ENCODE measurements at regions of chr1 and their contacts with region 1.

Region 1: DNA sequence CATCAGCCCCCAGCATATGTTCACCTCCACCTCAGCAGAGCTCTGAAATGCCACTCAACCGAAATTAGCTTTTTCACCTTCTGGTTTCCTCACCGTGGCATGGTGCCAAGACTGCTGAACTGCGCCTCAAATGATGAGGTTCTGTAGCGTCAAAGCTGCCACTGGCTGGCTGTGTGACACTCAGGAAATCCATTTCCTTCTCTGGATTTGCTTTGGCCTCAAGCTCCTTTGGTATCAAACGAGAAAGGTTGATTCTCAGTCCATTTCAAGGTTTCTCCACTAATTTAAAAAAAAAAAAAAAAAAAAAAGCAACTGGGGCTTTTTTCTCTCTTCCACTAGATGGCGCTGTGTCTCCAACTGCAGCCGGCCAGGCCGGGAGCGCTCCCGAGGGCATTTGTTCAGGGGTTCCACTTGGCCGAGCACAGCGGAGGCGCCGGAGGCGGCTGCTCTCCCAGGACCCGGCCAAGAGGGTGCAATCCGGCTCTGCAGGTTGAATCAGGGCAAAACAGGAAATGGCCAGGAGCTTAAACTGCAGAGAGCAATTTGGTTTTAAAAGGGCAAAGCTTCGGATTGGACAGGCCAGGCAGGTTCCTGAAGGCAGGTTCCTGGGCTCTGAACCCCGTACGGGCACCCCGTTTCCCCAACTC is 26.5 kb upstream of the PLA2G2C start:
- DNase-seq: peak; percentile 70
- H3K4me3 ChIP-seq: no peak overlapping the region
- H3K27ac ChIP-seq: no peak overlapping the region
- H3K4me1 ChIP-seq: no peaks in the 10 kb centered on the region
- H3K27me3 ChIP-seq: peaks cover 48% of the 10 kb centered on the region
- CTCF ChIP-seq: peak; percentile 93

Region 2: DNA sequence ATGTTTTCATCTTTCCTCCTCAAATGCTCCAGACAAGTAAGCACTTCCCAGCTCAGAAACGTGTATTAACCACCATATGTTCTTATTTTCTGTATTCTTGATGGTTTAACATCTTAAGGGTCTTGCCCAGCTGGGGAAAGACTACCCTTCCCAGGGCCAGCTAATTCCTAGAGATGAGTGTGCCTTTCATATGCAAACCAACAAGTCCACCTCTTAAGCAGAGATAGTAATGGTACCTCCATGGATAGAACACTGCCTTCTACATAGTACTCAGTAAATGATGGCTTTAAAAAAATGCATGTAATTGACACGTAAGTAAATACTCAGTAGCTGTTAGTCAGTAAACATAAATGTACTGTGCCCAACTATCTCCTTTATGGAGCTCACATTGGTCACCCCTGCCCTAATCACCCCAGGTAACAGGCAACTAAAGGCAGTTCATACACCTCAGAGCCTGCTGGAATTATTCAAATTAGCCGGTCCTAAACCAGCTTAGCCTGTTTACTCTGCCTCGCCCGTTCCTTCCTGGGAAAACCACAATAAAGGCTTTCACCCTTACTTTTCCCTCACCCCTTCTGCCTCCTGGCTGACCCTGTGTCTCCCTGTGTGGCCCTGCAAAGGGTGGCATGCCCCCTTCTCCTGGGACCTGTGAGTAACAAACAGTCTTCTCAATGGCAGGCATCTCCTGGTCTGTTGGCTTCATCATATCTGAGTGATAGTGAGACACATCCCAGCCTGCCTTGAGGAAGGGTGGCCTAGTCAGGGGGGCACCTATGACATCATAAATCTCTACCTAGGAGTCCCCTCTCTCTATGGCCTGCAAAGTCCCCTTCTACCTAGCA is 1772.2 kb before region 1 on chr1:
- CTCF ChIA-PET with region 1: interaction called, 11 read pairs
- POLR2A ChIA-PET with region 1: no interaction called
- intact Hi-C with region 1: no loop called
- DNase-seq: no peak
- H3K4me3 ChIP-seq: no peak overlapping the region
- H3K27ac ChIP-seq: no peak overlapping the region
- H3K4me1 ChIP-seq: no peaks in the 10 kb centered on the region
- H3K27me3 ChIP-seq: no peaks in the 10 kb centered on the region
- CTCF ChIP-seq: no peak

Region 3: DNA sequence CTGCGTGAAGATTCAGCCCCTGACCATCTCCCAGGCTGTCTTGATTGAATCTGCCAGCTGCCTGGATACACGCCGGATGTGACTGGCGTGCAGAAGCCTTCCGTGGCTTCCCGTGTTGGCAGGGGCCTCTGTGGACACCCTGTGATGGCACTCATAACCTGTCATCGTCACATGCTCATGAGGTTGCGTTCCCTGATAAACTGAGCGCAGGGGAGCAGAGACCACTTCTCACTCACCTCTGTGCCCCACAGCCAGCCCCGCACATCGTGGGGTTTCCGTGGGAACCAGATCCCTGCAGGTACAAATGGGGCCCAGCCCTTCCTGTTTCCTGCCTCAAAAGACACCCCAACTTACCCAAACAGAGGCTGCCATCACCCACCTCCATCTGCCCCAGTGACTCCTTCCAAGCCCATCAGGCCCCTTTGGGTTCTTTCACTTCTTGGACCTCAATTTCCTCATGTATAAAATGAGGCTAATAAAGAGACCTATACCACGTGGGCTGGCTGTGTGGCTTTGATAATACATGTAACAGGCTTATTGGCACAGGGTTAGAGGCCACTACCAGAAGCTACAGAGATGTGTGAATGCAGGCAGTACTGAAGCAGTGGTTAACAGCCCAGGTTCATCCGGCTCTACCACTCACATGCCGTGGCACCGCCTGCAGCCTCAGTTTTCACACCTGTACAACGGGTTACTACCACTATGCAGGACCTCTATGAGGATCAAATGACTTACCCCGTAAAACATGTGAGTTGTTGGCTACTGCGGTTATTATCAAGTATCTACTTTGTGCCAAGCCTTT is 524.6 kb before region 1 on chr1:
- CTCF ChIA-PET with region 1: interaction called, 10 read pairs
- POLR2A ChIA-PET with region 1: no interaction called
- intact Hi-C with region 1: no loop called
- DNase-seq: no peak
- H3K4me3 ChIP-seq: no peak overlapping the region
- H3K27ac ChIP-seq: no peak overlapping the region
- H3K4me1 ChIP-seq: no peaks in the 10 kb centered on the region
- H3K27me3 ChIP-seq: no peaks in the 10 kb centered on the region
- CTCF ChIP-seq: no peak

Region 4: DNA sequence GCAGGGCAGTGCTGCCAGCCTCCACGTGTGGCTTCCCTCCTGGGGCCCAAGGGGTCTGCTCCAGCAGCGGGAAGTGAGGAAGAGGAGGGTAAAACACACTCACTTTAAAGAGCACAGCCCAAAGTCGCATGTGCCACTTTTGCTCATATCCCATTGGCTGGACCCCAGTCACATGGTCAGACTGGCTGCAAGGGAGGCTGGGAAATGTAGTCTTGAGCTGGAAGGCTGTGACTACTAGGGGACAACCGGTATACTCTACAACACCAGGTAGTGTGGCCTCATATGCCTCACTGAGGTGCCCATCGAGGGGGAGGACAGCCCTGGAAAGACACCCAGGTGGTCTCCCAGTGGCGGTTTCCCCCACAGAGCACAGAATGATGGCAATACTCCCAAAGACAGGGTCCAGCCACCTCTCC is 228.0 kb after region 1 on chr1:
- CTCF ChIA-PET with region 1: no interaction called
- POLR2A ChIA-PET with region 1: no interaction called
- intact Hi-C with region 1: no loop called
- DNase-seq: peak; percentile 61
- H3K4me3 ChIP-seq: no peak overlapping the region
- H3K27ac ChIP-seq: no peak overlapping the region
- H3K4me1 ChIP-seq: no peaks in the 10 kb centered on the region
- H3K27me3 ChIP-seq: no peaks in the 10 kb centered on the region
- CTCF ChIP-seq: no peak

Region 5: GRCh38 chr1:20493839-20494608 is 281.2 kb after region 1 on chr1:
- CTCF ChIA-PET with region 1: interaction called, 5 read pairs
- POLR2A ChIA-PET with region 1: no interaction called
- intact Hi-C with region 1: loop called (anchors 1 kb)
- DNase-seq: peak; percentile 91
- H3K4me3 ChIP-seq: no peak overlapping the region
- H3K27ac ChIP-seq: no peak overlapping the region
- H3K4me1 ChIP-seq: peaks cover 6% of the 10 kb centered on the region
- H3K27me3 ChIP-seq: peaks cover 8% of the 10 kb centered on the region
- CTCF ChIP-seq: peak; percentile 98

Region 6: DNA sequence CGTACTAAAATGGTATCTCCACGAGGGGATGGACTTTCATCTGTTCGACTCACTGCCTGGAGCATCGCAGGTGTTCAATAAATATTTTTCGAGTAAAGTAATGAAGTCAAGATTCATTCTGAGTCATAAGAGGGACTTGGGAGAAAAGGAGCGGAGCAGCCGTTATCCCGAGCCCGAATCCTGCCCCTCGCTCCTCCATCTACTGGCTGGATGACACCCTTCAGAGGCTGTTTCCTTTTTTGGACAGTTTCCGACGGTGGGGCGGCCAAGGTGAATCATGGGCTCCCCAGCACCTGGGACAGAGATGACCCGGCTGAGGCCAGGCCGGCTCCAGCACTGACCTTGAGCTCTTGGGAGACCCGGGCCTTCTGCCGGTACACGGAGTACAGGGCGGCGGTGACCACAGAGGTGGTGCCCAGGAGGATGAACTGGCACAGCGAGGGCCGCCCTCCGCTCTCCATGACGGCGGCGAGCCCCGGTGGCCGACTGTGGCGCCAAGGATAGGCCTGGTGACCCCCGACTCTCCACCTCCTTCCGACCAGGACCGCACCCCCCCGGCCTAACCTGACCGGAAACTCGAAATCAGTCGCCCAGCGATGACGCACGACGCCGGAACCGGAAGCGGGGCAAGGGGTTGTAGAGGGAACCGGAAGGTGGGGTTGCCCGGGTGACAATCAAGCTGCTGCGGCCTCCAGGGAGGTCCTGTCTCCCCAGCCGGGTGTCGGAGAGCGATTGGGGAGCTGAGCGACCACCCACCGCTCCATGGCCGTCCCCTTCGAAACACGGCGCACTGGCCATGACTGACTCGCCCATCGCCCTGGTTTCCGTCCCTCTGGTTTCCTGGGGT is 295.0 kb after region 1 on chr1 and contains the start of gene MUL1:
- CTCF ChIA-PET with region 1: interaction called, 11 read pairs
- POLR2A ChIA-PET with region 1: no interaction called
- intact Hi-C with region 1: no loop called
- DNase-seq: peak; percentile 94
- H3K4me3 ChIP-seq: peak within 1 kb of the TSS; percentile 84
- H3K27ac ChIP-seq: peak within 1 kb of the TSS; percentile 73
- H3K4me1 ChIP-seq: peaks cover 13% of the 10 kb centered on the region
- H3K27me3 ChIP-seq: no peaks in the 10 kb centered on the region
- CTCF ChIP-seq: no peak
- total RNA-seq, gene MUL1: 20.1 and 21.6 TPM in 2 replicates

Measured in A673 (cell line).